Activated CD4-positive, alpha-beta T cell treated with anti-CD3 and anti-CD28 coated beads, Interleukin-2, amount 10 ng/mL, durations not matched to agents 24 days and 14 days (primary cell): ENCODE measurements at regions of chr15 and their contacts with region 1.

Region 1: GRCh38 chr15:56821721-56822425 is 88.6 kb upstream of the ZNF280D start:
- DNase-seq: peak; percentile 80
- H3K4me3 Mint-ChIP-seq: no peak overlapping the region
- H3K27ac Mint-ChIP-seq: no peak overlapping the region
- H3K4me1 Mint-ChIP-seq: peaks cover 10% of the 10 kb centered on the region
- H3K27me3 Mint-ChIP-seq: no peaks in the 10 kb centered on the region

Region 2: DNA sequence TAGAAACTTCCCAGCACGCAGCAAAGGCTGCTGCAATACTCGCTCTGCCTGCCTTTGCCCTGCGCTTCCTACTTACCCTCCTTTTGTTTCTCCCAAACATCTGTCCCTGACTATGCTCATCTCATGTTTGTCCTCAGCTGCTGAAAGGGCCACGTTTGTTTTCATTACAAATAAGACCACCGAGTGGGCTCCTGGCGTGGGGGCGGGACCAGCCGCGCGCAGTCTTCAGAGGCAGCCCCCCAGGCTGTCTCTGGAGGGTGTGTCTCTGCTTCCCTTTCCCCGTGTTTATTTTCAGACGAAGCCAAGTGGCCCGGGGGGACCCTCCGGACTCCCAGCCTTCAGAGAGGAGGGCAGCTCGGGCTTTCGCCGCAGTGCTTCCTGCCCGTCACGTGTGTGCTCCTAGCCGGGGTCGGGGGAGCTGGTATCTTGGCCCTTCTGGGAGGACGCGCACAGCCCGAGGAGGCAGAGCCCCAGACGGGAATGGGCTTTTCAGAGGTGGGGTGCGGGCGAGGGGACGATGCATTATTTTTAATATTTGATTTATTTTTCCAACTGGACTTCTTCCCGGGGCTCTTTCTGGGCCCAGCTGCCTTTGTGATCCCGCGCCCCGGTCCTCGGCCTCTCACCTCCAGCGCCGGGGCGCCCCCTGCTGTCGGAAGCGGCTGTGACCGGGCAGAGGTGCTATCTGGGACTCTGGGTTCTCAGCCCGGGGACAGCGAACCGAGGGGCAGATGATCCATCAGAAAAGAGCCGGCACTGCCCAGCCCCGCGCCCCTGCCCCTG is 484.5 kb after region 1 on chr15:
- intact Hi-C with region 1: loop called (anchors 2 kb)
- DNase-seq: peak; percentile 96
- H3K4me3 Mint-ChIP-seq: peak overlapping the region; percentile 71
- H3K27ac Mint-ChIP-seq: no peak overlapping the region
- H3K4me1 Mint-ChIP-seq: peaks cover 5% of the 10 kb centered on the region
- H3K27me3 Mint-ChIP-seq: peaks cover 9% of the 10 kb centered on the region